ENCODE measurements at regions of chr9 and their contacts with region 1.

Region 1: GRCh38 chr9:35732122-35732799 is at the starts of genes CREB3 and TLN1:
- DNase-seq: peak; percentile 91 to 98 (median 93)
- ATAC-seq: peak; percentile 88 to 92 (median 90)
- H3K4me3 ChIP-seq: peak within 1 kb of the TSS; percentile 94 to 97
- H3K4me3 Mint-ChIP-seq: peak within 1 kb of the TSS in 1 of 3 donors; percentile 95
- H3K27ac ChIP-seq: peak within 1 kb of the TSS; percentile 95
- H3K27ac Mint-ChIP-seq: peak within 1 kb of the TSS; percentile 94 to 95
- H3K4me1 ChIP-seq: peaks cover 46 to 68% of the 10 kb centered on the region in 2 experiments
- H3K4me1 Mint-ChIP-seq: peaks cover 17 to 31% (median 30%) of the 10 kb centered on the region in 3 donors
- H3K27me3 ChIP-seq: no peaks in the 10 kb centered on the region
- H3K27me3 Mint-ChIP-seq: no peaks in the 10 kb centered on the region
- total RNA-seq, gene CREB3: 15.9 to 22.6 (median 19.3) TPM
- total RNA-seq, gene TLN1: 229 to 366 (median 294) TPM

Region 2: GRCh38 chr9:35566417-35566816 is 165.8 kb before region 1 on chr9:
- CTCF ChIA-PET with region 1: no interaction called
- POLR2A ChIA-PET with region 1: no interaction called
- DNase-seq: no peak
- ATAC-seq: no peak
- H3K4me3 ChIP-seq: no peak overlapping the region
- H3K4me3 Mint-ChIP-seq: no peak overlapping the region
- H3K27ac ChIP-seq: no peak overlapping the region
- H3K27ac Mint-ChIP-seq: no peak overlapping the region
- H3K4me1 ChIP-seq: peaks cover 0 to 5% of the 10 kb centered on the region in 2 experiments
- H3K4me1 Mint-ChIP-seq: peaks cover 0 to 15% (median 4%) of the 10 kb centered on the region in 3 donors
- H3K27me3 ChIP-seq: peaks cover 0 to 5% of the 10 kb centered on the region in 2 experiments
- H3K27me3 Mint-ChIP-seq: no peaks in the 10 kb centered on the region

Region 3: DNA sequence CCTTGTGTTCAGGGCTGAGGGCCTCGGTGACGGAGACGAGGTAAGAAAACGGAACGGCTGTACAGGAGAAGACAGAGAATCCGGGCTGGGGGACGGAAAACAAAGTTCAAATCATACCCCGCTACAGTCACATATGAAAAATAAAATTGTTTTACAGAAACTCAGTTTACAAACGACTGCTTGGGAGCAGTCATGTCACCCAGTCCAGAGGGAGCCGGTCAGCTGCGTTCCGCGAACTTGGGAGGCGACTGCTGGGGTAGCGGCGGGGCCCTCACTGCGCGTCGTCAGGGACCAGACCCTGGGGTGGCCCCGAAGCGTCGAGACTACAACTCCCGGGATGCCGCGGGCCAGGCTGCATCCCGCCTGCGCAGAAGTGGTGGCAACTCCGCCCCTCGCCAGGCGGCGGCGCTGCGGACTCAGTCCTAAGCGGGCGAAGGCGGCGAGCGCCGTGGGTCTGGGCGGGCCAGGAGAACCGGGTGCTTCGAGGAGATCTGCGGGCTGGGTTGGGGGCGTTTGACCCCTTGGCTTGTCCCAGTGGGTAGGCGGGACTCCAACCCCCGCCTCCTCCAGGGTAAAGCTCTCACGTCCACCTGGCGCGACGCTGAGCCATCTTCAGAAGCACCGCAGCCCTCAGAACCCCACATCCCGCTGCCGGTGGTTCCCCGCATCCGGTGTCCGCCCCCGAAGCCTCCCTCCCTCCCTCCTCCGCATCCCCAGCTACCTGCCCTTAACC is 85.6 kb before region 1 on chr9:
- CTCF ChIA-PET with region 1: interaction called in 1 of 2 experiments, 15 read pairs
- POLR2A ChIA-PET with region 1: no interaction called
- DNase-seq: peak; percentile 74 to 95 (median 87)
- ATAC-seq: peak; percentile 83 to 87 (median 85)
- H3K4me3 ChIP-seq: peak overlapping the region; percentile 81 to 84
- H3K4me3 Mint-ChIP-seq: peak overlapping the region; percentile 85 to 97 (median 95)
- H3K27ac ChIP-seq: peak overlapping the region; percentile 92
- H3K27ac Mint-ChIP-seq: peak overlapping the region; percentile 99
- H3K4me1 ChIP-seq: peaks cover 31 to 78% of the 10 kb centered on the region in 2 experiments
- H3K4me1 Mint-ChIP-seq: peaks cover 54 to 74% (median 59%) of the 10 kb centered on the region in 3 donors
- H3K27me3 ChIP-seq: no peaks in the 10 kb centered on the region
- H3K27me3 Mint-ChIP-seq: no peaks in the 10 kb centered on the region

Region 4: GRCh38 chr9:35711501-35712428 is 20.5 kb before region 1 on chr9:
- CTCF ChIA-PET with region 1: interaction called, 3 read pairs
- POLR2A ChIA-PET with region 1: interaction called in 1 of 2 experiments, 14 read pairs
- DNase-seq: no peak
- ATAC-seq: no peak
- H3K4me3 ChIP-seq: no peak overlapping the region
- H3K4me3 Mint-ChIP-seq: no peak overlapping the region
- H3K27ac ChIP-seq: no peak overlapping the region
- H3K27ac Mint-ChIP-seq: no peak overlapping the region
- H3K4me1 ChIP-seq: no peaks in the 10 kb centered on the region
- H3K4me1 Mint-ChIP-seq: peaks cover 0 to 1% (median 0%) of the 10 kb centered on the region in 3 donors
- H3K27me3 ChIP-seq: no peaks in the 10 kb centered on the region
- H3K27me3 Mint-ChIP-seq: no peaks in the 10 kb centered on the region

Region 5: GRCh38 chr9:35748858-35749514 is 16.7 kb after region 1 on chr9 and contains the starts of genes GBA2 and RGP1:
- CTCF ChIA-PET with region 1: interaction called, 13 to 49 read pairs
- POLR2A ChIA-PET with region 1: interaction called in 1 of 2 experiments, 3 read pairs
- DNase-seq: peak in 28 of 35 experiments; percentile 11 to 74 (median 46)
- ATAC-seq: peak; percentile 73 to 86 (median 82)
- H3K4me3 ChIP-seq: peak within 1 kb of the TSS; percentile 77 to 93
- H3K4me3 Mint-ChIP-seq: peak within 1 kb of the TSS; percentile 91 to 94 (median 92)
- H3K27ac ChIP-seq: peak within 1 kb of the TSS; percentile 76
- H3K27ac Mint-ChIP-seq: peak within 1 kb of the TSS; percentile 95 to 96
- H3K4me1 ChIP-seq: peaks cover 16 to 43% of the 10 kb centered on the region in 2 experiments
- H3K4me1 Mint-ChIP-seq: peaks cover 48 to 56% (median 51%) of the 10 kb centered on the region in 3 donors
- H3K27me3 ChIP-seq: no peaks in the 10 kb centered on the region
- H3K27me3 Mint-ChIP-seq: no peaks in the 10 kb centered on the region
- total RNA-seq, gene GBA2: 35.4 to 63.3 (median 60.1) TPM
- total RNA-seq, gene RGP1: 20.6 to 36.5 (median 33.5) TPM

Region 6: DNA sequence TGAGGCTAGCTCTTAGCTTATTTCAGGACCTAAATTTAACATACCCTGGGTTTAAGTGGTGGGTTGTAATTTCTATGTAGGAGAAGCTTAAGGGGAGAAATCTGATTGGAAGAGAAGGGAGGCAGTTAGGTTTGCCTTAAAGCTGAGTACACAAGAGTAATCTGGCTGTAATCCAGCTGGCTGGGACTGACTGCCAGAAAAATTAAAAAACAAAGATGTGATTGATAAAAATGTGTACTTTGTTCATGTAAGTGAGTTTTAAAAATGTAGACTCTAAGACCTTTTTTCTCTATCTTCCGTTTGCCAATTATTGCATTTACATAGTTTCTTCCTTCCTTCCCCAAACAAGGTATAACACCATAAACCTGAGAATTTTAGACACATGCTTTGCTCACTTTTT is 39.3 kb after region 1 on chr9:
- CTCF ChIA-PET with region 1: no interaction called
- POLR2A ChIA-PET with region 1: no interaction called
- DNase-seq: no peak
- ATAC-seq: no peak
- H3K4me3 ChIP-seq: no peak overlapping the region
- H3K4me3 Mint-ChIP-seq: no peak overlapping the region
- H3K27ac ChIP-seq: no peak overlapping the region
- H3K27ac Mint-ChIP-seq: no peak overlapping the region
- H3K4me1 ChIP-seq: no peaks in the 10 kb centered on the region
- H3K4me1 Mint-ChIP-seq: peaks cover 0 to 7% (median 6%) of the 10 kb centered on the region in 3 donors
- H3K27me3 ChIP-seq: no peaks in the 10 kb centered on the region
- H3K27me3 Mint-ChIP-seq: no peaks in the 10 kb centered on the region

Region 7: DNA sequence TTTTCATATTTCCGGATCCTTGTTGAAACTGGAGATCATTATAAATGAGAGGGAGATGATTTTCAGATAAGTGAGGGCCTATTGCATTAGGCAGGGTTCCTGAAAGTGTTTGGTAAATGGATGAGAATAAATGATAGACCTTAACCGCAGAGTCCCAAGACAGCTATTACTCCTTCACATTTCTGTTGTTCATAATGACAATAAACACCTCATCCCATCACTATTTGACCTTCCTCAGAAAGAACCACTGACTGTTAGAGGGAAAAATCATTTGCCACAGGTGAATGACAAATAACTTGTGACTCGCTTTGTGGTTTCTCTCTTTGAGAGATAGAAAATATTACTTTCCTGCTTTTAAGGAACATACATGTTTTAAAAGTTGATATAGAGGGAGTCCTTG is 1974.0 kb after region 1 on chr9:
- CTCF ChIA-PET with region 1: no interaction called
- POLR2A ChIA-PET with region 1: interaction called in 1 of 2 experiments, 10 read pairs
- DNase-seq: no peak
- ATAC-seq: no peak
- H3K4me3 ChIP-seq: no peak overlapping the region
- H3K4me3 Mint-ChIP-seq: no peak overlapping the region
- H3K27ac ChIP-seq: no peak overlapping the region
- H3K27ac Mint-ChIP-seq: no peak overlapping the region
- H3K4me1 ChIP-seq: no peaks in the 10 kb centered on the region
- H3K4me1 Mint-ChIP-seq: no peaks in the 10 kb centered on the region
- H3K27me3 ChIP-seq: peaks cover 0 to 5% of the 10 kb centered on the region in 2 experiments
- H3K27me3 Mint-ChIP-seq: peaks cover 20 to 25% of the 10 kb centered on the region in 2 donors

Measured in T-cell (primary cell).